H1 (cell line): ENCODE measurements at regions of chr2 and their contacts with region 1.

Region 1: DNA sequence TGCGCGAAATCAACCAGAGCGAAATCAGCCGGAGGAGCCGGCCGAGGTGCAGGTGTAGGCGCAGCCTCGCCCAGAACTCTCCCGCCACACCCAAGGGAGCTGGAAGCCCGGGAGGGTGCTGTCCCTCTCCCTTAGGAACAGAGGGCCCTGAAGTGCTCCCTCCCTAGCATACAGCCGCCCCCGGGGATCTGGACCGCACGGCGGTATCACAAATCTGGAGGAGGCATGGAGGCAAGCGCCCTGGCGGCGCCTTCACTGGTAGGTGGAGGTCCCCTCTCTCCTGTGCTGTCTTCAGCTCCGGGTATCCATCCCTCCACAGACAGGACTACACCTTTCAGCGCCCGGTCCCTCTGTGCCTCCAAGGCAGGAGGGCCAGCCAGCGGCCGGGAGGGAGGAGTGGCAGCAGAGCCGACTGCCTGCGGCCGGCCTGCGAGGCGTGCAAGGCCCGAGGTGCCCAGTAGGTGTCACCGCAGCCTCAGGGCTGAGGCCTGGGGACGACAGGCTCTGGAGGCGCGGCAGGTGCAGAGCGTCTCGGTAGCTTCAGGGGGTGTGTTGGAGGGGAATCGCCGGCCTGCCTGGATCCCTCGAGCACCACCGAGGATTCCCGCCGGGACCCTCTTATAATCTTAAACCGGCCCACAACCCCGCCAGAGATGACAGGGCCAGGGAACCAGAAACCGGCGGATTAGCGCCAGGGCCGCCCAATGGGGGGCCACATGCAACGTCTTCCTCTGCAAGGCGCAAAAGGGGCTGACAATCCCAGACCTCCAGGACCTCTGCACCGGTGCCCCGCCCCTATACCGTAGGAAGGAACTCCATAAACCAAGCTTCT is 2.8 kb downstream of the IHH start:
- DNase-seq: peak; percentile 53 to 90
- H3K4me3 ChIP-seq: peak overlapping the region in 3 of 4 experiments; percentile 30 to 53 (median 38); a peak in 5 of 8 replicates
- H3K27ac ChIP-seq: no peak overlapping the region
- H3K4me1 ChIP-seq: peaks cover 0 to 27% (median 13%) of the 10 kb centered on the region in 4 experiments; a peak in 6 of 7 replicates
- H3K27me3 ChIP-seq: peaks cover 66 to 88% (median 78%) of the 10 kb centered on the region in 4 experiments
- CTCF ChIP-seq: peak in 2 of 3 experiments; percentile 94 to 97; a peak in 3 of 4 replicates
- EP300 ChIP-seq: no peak; a peak in 1 of 3 replicates
- POLR2A ChIP-seq: no peak
- RAD21 ChIP-seq: peak; percentile 96

Region 2: DNA sequence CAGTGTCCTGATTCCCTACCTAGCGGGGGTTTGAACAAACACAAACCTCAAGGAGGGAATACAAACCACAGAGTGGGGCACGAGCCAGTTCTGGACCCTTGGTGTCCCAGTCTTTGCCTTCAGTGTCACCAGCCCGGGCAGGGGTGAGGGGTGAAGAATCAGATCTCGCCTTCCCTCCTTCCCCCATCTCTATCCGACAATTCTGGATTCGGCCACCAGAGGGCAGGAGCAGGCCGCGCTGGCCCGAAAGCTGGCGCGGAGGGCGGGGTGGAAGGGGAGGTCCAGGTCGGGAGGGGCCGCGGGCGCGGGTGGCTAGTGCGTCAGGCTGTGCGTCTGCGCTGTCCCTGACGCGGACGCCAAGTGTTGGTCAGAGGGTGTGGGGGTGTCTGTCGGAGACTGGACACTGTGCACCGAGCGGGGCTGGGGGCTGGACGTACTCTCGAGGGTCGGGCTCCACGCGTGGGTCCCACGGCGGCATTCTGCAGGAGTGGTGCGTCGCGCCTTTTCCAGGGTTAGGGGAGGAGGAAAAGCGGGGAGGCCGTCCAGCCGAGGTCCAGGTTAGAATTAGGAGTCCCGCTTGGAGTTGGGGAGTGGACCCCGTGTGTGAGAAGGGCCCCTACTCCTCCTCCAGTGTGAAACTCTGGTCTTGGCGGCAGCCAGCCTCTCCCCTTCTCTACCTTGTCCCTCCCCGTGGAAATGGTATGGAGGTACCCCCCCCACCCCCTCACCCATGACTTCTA is 61.8 kb before region 1 on chr2:
- CTCF ChIA-PET with region 1: interaction called, 134 read pairs
- POLR2A ChIA-PET with region 1: no interaction called
- DNase-seq: peak in 1 of 2 experiments; percentile 99
- H3K4me3 ChIP-seq: peak overlapping the region in 3 of 4 experiments; percentile 27 to 49 (median 34); a peak in 4 of 8 replicates
- H3K27ac ChIP-seq: no peak overlapping the region
- H3K4me1 ChIP-seq: peaks cover 0 to 43% (median 26%) of the 10 kb centered on the region in 4 experiments; a peak in 6 of 7 replicates
- H3K27me3 ChIP-seq: peaks cover 98 to 100% (median 99%) of the 10 kb centered on the region in 4 experiments
- CTCF ChIP-seq: peak in 2 of 3 experiments; percentile 88; a peak in 3 of 4 replicates
- EP300 ChIP-seq: 0 out of 3 replicates have a peak, but pooled peaks of 1 of the 2 experiments have one; percentile 20
- POLR2A ChIP-seq: no peak
- RAD21 ChIP-seq: peak; percentile 79 to 89

Region 3: GRCh38 chr2:219079417-219079816 is 21.5 kb after region 1 on chr2:
- CTCF ChIA-PET with region 1: interaction called, 1,006 read pairs
- POLR2A ChIA-PET with region 1: no interaction called
- DNase-seq: no peak
- H3K4me3 ChIP-seq: no peak overlapping the region
- H3K27ac ChIP-seq: no peak overlapping the region
- H3K4me1 ChIP-seq: no peaks in the 10 kb centered on the region
- H3K27me3 ChIP-seq: no peaks in the 10 kb centered on the region
- CTCF ChIP-seq: no peak
- EP300 ChIP-seq: no peak
- POLR2A ChIP-seq: no peak
- RAD21 ChIP-seq: no peak

Region 4: DNA sequence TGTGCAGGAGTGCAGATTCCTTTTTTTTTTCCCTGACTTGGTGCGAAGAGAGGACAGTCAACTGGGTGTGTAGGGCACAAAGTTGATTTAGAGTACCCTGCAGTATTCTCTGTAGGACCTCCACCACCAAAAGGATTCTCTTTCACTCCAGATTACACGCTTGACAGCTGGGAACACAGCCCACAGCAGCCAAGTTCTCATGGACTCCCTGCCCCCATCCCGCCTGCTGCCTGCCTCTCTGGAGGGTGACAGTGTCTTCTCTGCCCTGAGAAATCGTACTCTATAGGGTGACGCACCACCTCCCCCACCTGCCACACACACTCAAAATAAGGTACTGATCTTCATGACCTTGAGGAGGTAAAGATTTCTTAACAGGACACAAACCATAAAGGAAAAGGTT is 29.4 kb after region 1 on chr2:
- CTCF ChIA-PET with region 1: interaction called, 17 read pairs
- POLR2A ChIA-PET with region 1: no interaction called
- DNase-seq: no peak
- H3K4me3 ChIP-seq: no peak overlapping the region
- H3K27ac ChIP-seq: no peak overlapping the region
- H3K4me1 ChIP-seq: no peaks in the 10 kb centered on the region
- H3K27me3 ChIP-seq: no peaks in the 10 kb centered on the region
- CTCF ChIP-seq: no peak
- EP300 ChIP-seq: no peak
- POLR2A ChIP-seq: no peak
- RAD21 ChIP-seq: no peak

Region 5: DNA sequence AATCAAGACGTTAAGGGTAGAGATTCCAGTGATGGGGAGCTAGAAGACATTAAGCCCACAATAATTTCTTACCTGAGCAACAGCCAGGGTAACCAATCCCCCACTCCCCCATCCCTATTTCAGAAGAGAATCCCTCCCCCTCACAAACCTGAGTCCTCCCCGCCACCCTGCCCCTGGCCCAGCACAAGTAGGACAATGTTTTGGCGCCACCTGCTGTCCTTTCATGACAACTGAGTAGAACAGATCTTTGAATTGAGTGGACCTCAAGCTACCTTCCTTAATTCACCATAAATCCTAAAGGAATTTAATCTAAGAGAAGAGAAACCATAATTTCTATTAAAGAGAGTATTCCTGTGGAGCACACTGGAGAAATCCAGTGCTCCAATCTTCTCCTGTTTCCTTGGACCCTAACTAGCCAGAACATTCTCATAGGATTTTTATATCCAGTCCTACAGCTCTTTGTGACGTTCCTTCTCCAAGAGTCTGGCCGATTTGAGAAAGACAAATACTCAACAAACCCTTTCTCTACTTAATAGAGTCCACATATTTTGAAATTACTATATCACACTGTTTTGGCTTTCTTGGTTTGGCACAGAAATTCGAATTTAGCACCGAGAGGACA is 61.6 kb after region 1 on chr2:
- CTCF ChIA-PET with region 1: interaction called, 1,777 read pairs
- POLR2A ChIA-PET with region 1: interaction called, 4 read pairs
- DNase-seq: peak in 1 of 2 experiments; percentile 79
- H3K4me3 ChIP-seq: no peak overlapping the region
- H3K27ac ChIP-seq: no peak overlapping the region
- H3K4me1 ChIP-seq: no peaks in the 10 kb centered on the region; a peak in 2 of 7 replicates
- H3K27me3 ChIP-seq: no peaks in the 10 kb centered on the region
- CTCF ChIP-seq: peak; percentile 64 to 82 (median 67)
- EP300 ChIP-seq: no peak
- POLR2A ChIP-seq: no peak
- RAD21 ChIP-seq: peak; percentile 90 to 92

Region 6: DNA sequence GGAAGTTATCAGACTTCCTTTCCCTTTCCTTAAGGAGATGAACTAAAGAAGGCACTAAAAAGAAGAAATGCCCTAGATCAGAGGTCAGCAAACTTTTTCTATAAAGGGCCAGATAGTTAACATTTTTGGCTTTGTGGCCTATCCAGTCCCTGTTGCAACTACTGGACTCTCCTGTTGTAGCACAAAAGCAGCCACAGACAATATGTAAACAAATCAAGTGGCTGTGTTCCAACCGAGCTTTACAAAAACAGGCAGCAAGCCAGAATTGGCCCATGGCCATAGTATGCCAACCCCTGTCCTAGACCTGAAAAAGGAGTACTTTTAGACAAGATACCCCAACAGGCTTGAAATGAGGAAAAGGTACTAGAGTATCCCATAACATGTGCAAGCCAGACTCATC is 91.7 kb after region 1 on chr2:
- CTCF ChIA-PET with region 1: interaction called, 119 read pairs
- POLR2A ChIA-PET with region 1: no interaction called
- DNase-seq: no peak
- H3K4me3 ChIP-seq: no peak overlapping the region
- H3K27ac ChIP-seq: no peak overlapping the region
- H3K4me1 ChIP-seq: no peaks in the 10 kb centered on the region
- H3K27me3 ChIP-seq: no peaks in the 10 kb centered on the region
- CTCF ChIP-seq: no peak
- EP300 ChIP-seq: no peak
- POLR2A ChIP-seq: no peak
- RAD21 ChIP-seq: no peak

Region 7: GRCh38 chr2:219160186-219161017 is 102.5 kb after region 1 on chr2 and contains the start of gene NHEJ1:
- CTCF ChIA-PET with region 1: interaction called, 119 read pairs
- POLR2A ChIA-PET with region 1: interaction called, 5 read pairs
- DNase-seq: peak in 1 of 2 experiments; percentile 100
- H3K4me3 ChIP-seq: peak within 1 kb of the TSS; percentile 78 to 83 (median 81)
- H3K27ac ChIP-seq: 0 out of 2 replicates have a peak within 1 kb of the TSS, but pooled peaks have one; percentile 69
- H3K4me1 ChIP-seq: peaks cover 0 to 5% (median 2%) of the 10 kb centered on the region in 4 experiments; a peak in 3 of 7 replicates
- H3K27me3 ChIP-seq: no peaks in the 10 kb centered on the region; a peak in 2 of 7 replicates
- CTCF ChIP-seq: peak; percentile 86 to 90 (median 89)
- EP300 ChIP-seq: no peak
- POLR2A ChIP-seq: peak in 1 of 2 experiments; percentile 75; a peak in 2 of 3 replicates
- RAD21 ChIP-seq: peak; percentile 78 to 82
- total RNA-seq, gene NHEJ1: 22.7 and 25.7 TPM in 2 replicates

Region 8: DNA sequence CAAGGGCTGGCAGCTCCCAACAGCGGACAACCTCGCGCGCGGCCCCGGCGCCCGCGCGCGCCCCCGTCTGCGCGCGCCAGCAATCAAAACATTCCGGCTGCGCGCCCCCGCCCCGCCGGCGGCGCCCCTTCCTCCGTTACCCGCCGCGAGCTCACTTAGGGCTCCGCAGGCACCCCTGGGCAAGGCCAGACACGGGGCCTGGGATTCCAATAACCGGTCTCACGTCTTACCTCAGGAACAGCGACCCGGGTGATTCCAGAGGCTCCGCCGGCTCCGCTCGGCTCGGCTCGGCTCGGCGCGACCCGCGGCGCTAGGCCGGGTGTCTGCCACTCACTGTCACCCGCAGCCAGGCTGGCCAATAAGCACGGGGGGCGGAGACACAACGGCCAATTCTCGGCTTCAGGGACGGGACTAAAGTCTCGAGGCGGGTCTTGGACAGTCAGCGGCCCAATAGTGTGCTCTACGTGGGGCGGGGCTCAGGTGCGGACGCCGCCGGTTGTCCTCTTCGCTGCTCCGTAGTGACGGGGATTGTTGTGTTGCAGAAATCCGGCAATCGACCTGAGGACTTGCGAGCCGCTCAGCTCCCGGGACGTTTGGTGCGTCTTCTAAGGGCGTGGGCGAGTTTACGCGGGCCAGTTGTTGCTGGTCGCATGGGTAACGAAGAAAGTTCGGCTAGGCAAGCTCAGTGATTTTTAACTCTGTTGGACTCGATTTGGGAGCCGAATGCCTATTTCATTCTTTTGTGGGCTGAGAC is 171.6 kb after region 1 on chr2 and contains the starts of genes ANKZF1 and ATG9A:
- CTCF ChIA-PET with region 1: no interaction called
- POLR2A ChIA-PET with region 1: no interaction called
- DNase-seq: peak; percentile 93 to 95
- H3K4me3 ChIP-seq: peak within 1 kb of the TSS; percentile 82 to 97 (median 92)
- H3K27ac ChIP-seq: peak within 1 kb of the TSS; percentile 71
- H3K4me1 ChIP-seq: peaks cover 0 to 6% (median 3%) of the 10 kb centered on the region in 4 experiments; a peak in 5 of 7 replicates
- H3K27me3 ChIP-seq: no peaks in the 10 kb centered on the region; a peak in 1 of 7 replicates
- CTCF ChIP-seq: no peak
- EP300 ChIP-seq: 0 out of 3 replicates have a peak, but pooled peaks of 1 of the 2 experiments have one; percentile 13
- POLR2A ChIP-seq: peak; percentile 79 to 90
- RAD21 ChIP-seq: peak in 1 of 2 experiments; percentile 6; a peak in 1 of 4 replicates
- total RNA-seq, gene ANKZF1: 44.4 and 50.1 TPM in 2 replicates
- total RNA-seq, gene ATG9A: 43.6 and 43.8 TPM in 2 replicates